CD8-positive, alpha-beta memory T cell (primary cell): ENCODE measurements at regions of chr1 and their contacts with region 1.

Region 1: DNA sequence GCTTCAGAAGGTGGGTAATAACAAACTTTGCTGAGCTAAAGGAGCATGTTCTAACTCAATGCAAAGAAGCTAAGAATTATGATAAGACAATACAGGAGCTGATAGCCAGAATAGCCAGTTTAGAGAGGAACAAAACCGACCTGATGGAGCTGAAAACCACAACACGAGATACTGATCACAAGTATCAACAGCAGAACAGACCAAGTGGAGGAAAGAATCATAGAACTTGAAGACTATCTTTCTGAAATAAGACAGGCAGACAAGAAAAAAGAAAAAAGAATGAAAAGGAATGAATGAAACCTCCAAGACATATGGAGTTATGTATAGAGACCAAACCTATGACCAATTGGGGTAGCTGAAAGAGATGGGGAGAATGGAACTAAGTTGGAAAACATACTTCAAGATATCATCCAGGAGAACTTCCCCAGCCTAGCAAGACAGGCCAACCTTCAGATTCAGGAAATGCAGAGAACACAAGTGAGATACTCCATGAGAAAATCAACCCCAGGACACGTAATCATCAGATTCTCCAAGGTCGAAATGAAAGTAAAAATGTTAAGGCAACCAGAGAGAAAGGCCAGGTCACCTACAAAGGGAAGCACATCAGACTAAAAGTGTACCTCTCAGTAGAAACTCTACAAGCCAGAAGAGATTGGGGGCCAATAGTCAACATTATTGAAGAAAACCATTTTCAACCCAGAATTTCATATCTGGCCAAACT is 20.5 kb downstream of the CD84 start:
- DNase-seq: peak in 1 of 5 donors; percentile 29
- H3K4me3 ChIP-seq: peak overlapping the region; percentile 50
- H3K4me3 Mint-ChIP-seq: peak overlapping the region; percentile 72 to 90 (median 87)
- H3K27ac ChIP-seq: peak overlapping the region; percentile 59
- H3K27ac Mint-ChIP-seq: peak overlapping the region; percentile 85 to 98 (median 96)
- H3K4me1 ChIP-seq: peaks cover 54% of the 10 kb centered on the region
- H3K4me1 Mint-ChIP-seq: peaks cover 84 to 94% (median 92%) of the 10 kb centered on the region in 3 donors
- H3K27me3 ChIP-seq: no peaks in the 10 kb centered on the region
- H3K27me3 Mint-ChIP-seq: no peaks in the 10 kb centered on the region

Region 2: DNA sequence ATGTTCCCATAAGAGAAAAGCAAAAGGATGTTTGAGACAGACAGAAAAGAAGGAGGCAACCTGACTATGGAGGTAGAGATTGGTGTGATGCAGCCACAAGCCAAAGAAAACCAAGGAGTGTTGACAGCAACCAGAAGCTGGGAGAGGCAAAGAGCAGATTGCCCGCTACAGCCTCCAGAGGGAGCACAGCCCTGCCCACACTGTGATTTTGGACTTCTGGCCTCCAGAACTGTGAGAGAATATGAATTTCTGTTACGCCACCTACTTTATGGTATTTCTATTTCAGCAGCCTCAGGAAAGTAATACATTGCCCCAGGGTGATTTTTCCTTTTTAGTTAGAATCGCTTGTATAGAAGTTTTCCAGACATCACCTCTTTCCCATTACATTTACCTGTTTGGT is 64.2 kb before region 1 on chr1:
- CTCF ChIA-PET with region 1: no interaction called
- POLR2A ChIA-PET with region 1: no interaction called
- DNase-seq: no peak
- H3K4me3 ChIP-seq: no peak overlapping the region
- H3K4me3 Mint-ChIP-seq: no peak overlapping the region
- H3K27ac ChIP-seq: no peak overlapping the region
- H3K27ac Mint-ChIP-seq: peak overlapping the region in 7 of 8 donors; percentile 4 to 89 (median 56)
- H3K4me1 ChIP-seq: peaks cover 9% of the 10 kb centered on the region
- H3K4me1 Mint-ChIP-seq: peaks cover 22 to 68% (median 43%) of the 10 kb centered on the region in 3 donors
- H3K27me3 ChIP-seq: no peaks in the 10 kb centered on the region
- H3K27me3 Mint-ChIP-seq: no peaks in the 10 kb centered on the region

Region 3: DNA sequence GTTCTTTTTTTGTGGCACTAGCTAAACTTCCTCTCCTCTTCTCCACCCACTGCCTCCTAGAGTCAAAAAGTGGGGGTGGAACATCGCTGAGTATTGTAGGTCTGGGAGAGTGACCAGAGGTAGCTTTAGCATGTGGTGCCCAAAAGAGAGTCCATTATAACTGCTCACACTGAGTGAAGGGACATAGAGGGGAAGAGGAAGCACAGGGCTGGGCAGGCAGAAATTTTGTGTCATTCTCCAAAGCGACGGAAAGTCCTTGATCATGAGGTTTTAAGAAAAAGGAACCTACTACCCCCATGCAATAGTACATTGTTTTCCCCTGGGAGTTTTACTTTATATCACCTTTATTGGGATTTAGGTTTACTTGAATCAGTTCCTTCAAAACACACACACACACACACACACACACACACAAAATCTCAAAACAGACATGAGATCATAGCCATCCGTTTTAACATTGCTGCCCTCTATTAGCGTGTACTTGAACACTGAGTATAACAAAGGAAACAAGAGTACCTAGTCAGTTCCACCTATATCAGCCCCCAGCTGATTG is 16.4 kb after region 1 on chr1:
- CTCF ChIA-PET with region 1: interaction called, 21 read pairs
- POLR2A ChIA-PET with region 1: interaction called, 44 read pairs
- DNase-seq: no peak
- H3K4me3 ChIP-seq: peak overlapping the region; percentile 69
- H3K4me3 Mint-ChIP-seq: peak overlapping the region; percentile 89 to 99 (median 98)
- H3K27ac ChIP-seq: peak overlapping the region; percentile 35
- H3K27ac Mint-ChIP-seq: peak overlapping the region; percentile 86 to 97 (median 94)
- H3K4me1 ChIP-seq: peaks cover 81% of the 10 kb centered on the region
- H3K4me1 Mint-ChIP-seq: peaks cover 74 to 93% (median 82%) of the 10 kb centered on the region in 3 donors
- H3K27me3 ChIP-seq: no peaks in the 10 kb centered on the region
- H3K27me3 Mint-ChIP-seq: no peaks in the 10 kb centered on the region